ENCODE measurements at regions of chr3 and their contacts with region 1.

Region 1: DNA sequence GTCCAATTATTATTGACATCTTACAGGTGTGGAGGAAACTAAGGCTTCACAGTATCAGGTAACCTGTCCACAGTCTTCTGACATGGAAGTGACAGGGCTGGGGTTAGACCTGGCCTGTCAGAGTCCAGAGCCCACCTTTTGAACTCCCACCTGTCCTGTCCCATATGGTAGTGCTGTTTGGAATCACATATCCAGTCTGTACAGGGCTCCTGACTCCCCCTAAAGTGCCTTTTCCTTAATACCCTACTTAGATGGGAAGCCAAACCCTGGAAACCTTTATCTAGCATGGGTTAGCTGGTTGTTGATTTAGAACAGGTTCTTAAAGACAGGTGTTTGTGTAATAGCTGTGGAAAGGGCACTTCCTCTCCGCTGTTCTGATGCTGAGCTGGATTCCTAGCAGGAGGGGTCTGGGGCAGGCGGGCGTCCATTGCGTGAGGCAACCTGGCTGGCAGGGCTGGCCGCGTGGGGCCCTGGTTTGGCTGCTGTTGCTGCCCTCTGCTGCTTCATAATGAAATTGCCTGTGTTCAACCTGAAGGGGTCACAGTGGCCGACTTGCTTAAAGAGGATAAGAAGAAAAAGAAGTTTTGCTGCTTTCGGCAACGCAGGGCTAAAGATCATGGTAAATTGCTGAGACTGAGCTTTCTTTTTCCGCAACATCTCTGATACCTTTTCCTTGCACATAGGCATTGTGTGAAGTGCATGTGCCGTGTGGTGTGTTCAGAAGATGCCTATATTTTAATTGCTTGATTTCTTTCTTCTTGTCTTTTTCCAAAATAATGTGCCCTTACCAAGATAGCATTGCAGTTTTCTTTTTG is 136.2 kb downstream of the CHDH start:
- DNase-seq: peak; percentile 34 to 85 (median 69)

Region 2: GRCh38 chr3:53303957-53304356 is 406.1 kb before region 1 on chr3:
- intact Hi-C with region 1: loop called (anchors 10 kb)
- DNase-seq: peak in 1 of 42 donors; percentile 41

Region 3: GRCh38 chr3:53375019-53375418 is 335.0 kb before region 1 on chr3:
- intact Hi-C with region 1: loop called (anchors 10 kb)
- DNase-seq: peak; percentile 25 to 82 (median 66)

Region 4: DNA sequence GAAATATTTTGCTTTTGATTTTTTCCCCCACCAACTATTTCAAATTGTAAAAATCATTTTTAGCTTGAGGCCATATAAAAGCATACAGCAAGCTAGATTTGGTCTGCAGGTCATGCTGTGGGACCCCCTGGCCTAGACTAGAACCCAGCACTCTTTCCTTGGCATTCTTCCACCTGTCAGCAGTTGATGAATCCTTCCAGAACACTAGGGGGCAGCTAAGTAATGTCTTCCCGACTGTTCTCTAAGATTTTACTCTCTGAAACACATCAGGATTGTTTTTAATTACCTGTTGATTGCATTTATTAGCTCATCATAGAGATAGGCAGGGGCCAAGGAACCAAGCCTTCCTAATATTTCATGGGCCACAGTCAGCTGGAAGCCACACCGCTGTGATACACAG is 41.2 kb before region 1 on chr3:
- intact Hi-C with region 1: no loop called
- DNase-seq: no peak

Region 5: GRCh38 chr3:53696401-53697150 is 13.5 kb before region 1 on chr3:
- intact Hi-C with region 1: no loop called
- DNase-seq: peak in 1 of 42 donors; percentile 40